ENCODE measurements at regions of chr10 and their contacts with region 1.

Region 1: GRCh38 chr10:69061305-69062161 is 26.4 kb upstream of the SRGN start:
- H3K4me3 Mint-ChIP-seq: peak overlapping the region; percentile 58
- H3K27ac Mint-ChIP-seq: peak overlapping the region; percentile 89
- H3K4me1 Mint-ChIP-seq: peaks cover 73% of the 10 kb centered on the region
- H3K27me3 Mint-ChIP-seq: no peaks in the 10 kb centered on the region

Region 2: DNA sequence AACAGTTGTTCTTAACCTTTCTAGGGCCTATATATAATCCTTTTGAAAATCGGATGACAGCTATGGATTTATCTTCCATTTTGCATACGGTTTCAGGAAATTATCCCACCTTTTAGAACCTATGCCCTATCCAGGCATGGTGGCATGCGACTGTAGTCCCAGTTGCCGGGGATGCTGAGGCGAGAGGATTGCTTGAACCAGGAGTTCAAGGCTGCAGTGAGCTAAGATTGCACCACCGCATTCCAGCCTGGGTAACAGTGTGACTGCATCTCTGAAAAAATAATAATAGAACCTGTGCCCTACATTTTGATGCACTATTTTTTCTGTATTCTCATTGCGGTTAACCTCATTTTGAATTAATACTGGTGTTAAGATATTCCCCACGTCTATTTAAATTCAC is 328.9 kb before region 1 on chr10:
- intact Hi-C with region 1: no loop called
- H3K4me3 Mint-ChIP-seq: no peak overlapping the region
- H3K27ac Mint-ChIP-seq: no peak overlapping the region
- H3K4me1 Mint-ChIP-seq: no peaks in the 10 kb centered on the region
- H3K27me3 Mint-ChIP-seq: no peaks in the 10 kb centered on the region

Region 3: GRCh38 chr10:69045441-69046300 is 15.9 kb before region 1 on chr10:
- intact Hi-C with region 1: loop called (anchors 2 kb)
- H3K4me3 Mint-ChIP-seq: peak overlapping the region; percentile 34
- H3K27ac Mint-ChIP-seq: peak overlapping the region; percentile 99
- H3K4me1 Mint-ChIP-seq: peaks cover 66% of the 10 kb centered on the region
- H3K27me3 Mint-ChIP-seq: no peaks in the 10 kb centered on the region

Region 4: GRCh38 chr10:69051303-69051702 is 10.2 kb before region 1 on chr10:
- intact Hi-C with region 1: loop called (anchors 1 kb)
- H3K4me3 Mint-ChIP-seq: peak overlapping the region; percentile 14
- H3K27ac Mint-ChIP-seq: peak overlapping the region; percentile 99
- H3K4me1 Mint-ChIP-seq: peaks cover 94% of the 10 kb centered on the region
- H3K27me3 Mint-ChIP-seq: no peaks in the 10 kb centered on the region

Region 5: GRCh38 chr10:69087590-69088470 is 26.3 kb after region 1 on chr10 and contains the start of gene SRGN:
- intact Hi-C with region 1: loop called (anchors 1 kb)
- H3K4me3 Mint-ChIP-seq: peak within 1 kb of the TSS; percentile 81
- H3K27ac Mint-ChIP-seq: peak within 1 kb of the TSS; percentile 86
- H3K4me1 Mint-ChIP-seq: peaks cover 51% of the 10 kb centered on the region
- H3K27me3 Mint-ChIP-seq: no peaks in the 10 kb centered on the region